T-cell (primary cell): ENCODE measurements at regions of chr1 and their contacts with region 1.

Region 1: DNA sequence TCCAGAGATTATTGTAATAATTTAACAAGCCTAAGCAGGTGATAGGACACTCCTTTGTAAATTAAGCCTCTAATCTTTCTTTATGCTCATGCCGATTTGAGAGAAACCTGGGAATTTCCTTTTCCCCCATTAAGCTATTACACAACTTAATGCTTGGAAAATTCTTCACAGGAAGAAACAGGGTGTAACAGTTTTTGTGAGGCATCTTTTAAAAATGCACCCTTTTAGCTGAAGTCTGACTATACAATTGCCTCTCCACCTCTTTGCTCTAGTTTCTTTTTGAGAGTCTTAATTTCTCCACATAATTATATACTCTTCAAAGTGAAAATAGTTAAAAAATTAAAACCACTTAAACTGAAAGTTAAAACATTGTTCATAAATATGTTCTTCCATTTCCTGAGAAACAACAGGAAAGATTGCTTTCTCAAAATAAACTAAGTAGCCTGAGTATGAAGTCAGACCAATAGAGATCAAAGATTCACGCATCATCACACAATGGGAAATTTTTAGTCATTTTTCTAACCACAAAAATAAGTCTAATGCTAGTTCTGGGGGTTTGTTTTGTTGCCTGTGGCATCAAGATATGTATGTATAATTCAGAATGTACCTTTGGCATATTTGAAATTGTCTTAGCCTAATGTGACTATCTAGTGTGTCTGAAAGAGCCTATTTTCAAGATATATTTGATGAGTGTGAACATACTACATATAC is 34.7 kb downstream of the LRRC8D start:
- DNase-seq: peak in 2 of 35 experiments; percentile 6 to 78
- ATAC-seq: peak; percentile 72 to 91 (median 84)
- H3K4me3 ChIP-seq: no peak overlapping the region
- H3K4me3 Mint-ChIP-seq: no peak overlapping the region
- H3K27ac ChIP-seq: peak overlapping the region; percentile 90
- H3K27ac Mint-ChIP-seq: no peak overlapping the region
- H3K4me1 ChIP-seq: peaks cover 9 to 12% of the 10 kb centered on the region in 2 experiments
- H3K4me1 Mint-ChIP-seq: peaks cover 7 to 23% (median 18%) of the 10 kb centered on the region in 3 donors
- H3K27me3 ChIP-seq: no peaks in the 10 kb centered on the region
- H3K27me3 Mint-ChIP-seq: no peaks in the 10 kb centered on the region

Region 2: GRCh38 chr1:89843281-89844121 is 12.1 kb before region 1 on chr1:
- CTCF ChIA-PET with region 1: interaction called, 6 to 8 read pairs
- POLR2A ChIA-PET with region 1: interaction called, 11 to 14 read pairs
- DNase-seq: peak; percentile 48 to 88 (median 72)
- ATAC-seq: peak; percentile 89 to 94 (median 90)
- H3K4me3 ChIP-seq: peak overlapping the region; percentile 82 to 98
- H3K4me3 Mint-ChIP-seq: peak overlapping the region; percentile 92 to 94 (median 93)
- H3K27ac ChIP-seq: peak overlapping the region; percentile 68
- H3K27ac Mint-ChIP-seq: peak overlapping the region; percentile 93
- H3K4me1 ChIP-seq: peaks cover 22 to 43% of the 10 kb centered on the region in 2 experiments
- H3K4me1 Mint-ChIP-seq: peaks cover 53 to 63% (median 55%) of the 10 kb centered on the region in 3 donors
- H3K27me3 ChIP-seq: no peaks in the 10 kb centered on the region
- H3K27me3 Mint-ChIP-seq: no peaks in the 10 kb centered on the region

Region 3: DNA sequence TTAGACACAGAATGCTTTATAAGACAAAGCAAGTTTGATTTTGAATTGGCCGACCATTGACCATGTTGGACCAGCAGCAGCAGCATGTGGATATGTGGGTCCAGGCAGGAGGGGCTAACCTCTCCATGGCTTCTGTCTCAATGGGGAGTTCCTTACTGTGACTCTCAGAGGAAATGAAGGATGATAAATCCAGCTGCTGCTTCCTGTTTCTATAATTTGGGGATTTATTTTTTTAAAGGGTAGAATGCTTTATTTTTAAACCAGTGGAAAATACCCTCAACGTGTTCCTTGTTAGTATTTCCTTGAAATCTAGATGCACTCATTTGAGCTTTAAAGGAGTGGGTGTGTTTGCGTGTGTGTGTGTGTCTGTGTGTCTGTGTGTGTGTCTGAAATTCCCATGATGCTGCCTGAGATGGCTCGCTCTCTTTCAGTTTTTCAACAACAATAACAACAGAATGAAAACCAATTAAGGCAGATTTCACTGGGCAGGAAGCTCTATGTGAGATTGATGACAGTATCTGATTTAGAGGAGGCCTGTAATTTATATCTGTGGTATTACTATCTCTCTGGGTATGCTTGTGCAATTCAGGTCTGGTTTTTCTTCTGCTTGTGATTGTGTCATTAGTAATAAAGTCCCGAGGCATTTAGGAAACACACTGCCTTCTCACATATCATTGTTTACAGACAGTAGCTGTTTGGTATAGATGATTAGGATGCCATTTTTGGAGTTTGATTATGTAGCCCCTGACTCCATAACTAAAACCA is 53.3 kb after region 1 on chr1:
- CTCF ChIA-PET with region 1: no interaction called
- POLR2A ChIA-PET with region 1: no interaction called
- DNase-seq: no peak
- ATAC-seq: no peak
- H3K4me3 ChIP-seq: no peak overlapping the region
- H3K4me3 Mint-ChIP-seq: no peak overlapping the region
- H3K27ac ChIP-seq: no peak overlapping the region
- H3K27ac Mint-ChIP-seq: peak overlapping the region in 1 of 2 donors; percentile 16
- H3K4me1 ChIP-seq: peaks cover 0 to 3% of the 10 kb centered on the region in 2 experiments
- H3K4me1 Mint-ChIP-seq: peaks cover 66 to 74% (median 67%) of the 10 kb centered on the region in 3 donors
- H3K27me3 ChIP-seq: no peaks in the 10 kb centered on the region
- H3K27me3 Mint-ChIP-seq: no peaks in the 10 kb centered on the region